ENCODE measurements at regions of chr1 and their contacts with region 1.

Region 1: GRCh38 chr1:151024540-151025146 is 11.7 kb upstream of the BNIPL start:
- DNase-seq: peak; percentile 58
- ATAC-seq: peak; percentile 97
- H3K4me3 ChIP-seq: no peak overlapping the region
- H3K27ac ChIP-seq: no peak overlapping the region
- H3K4me1 ChIP-seq: no peaks in the 10 kb centered on the region
- H3K27me3 ChIP-seq: no peaks in the 10 kb centered on the region
- CTCF ChIP-seq: peak; percentile 91
- EP300 ChIP-seq: no peak
- POLR2A ChIP-seq: no peak
- RAD21 ChIP-seq: peak; percentile 78

Region 2: GRCh38 chr1:151056149-151056548 is 31.5 kb after region 1 on chr1:
- CTCF ChIA-PET with region 1: no interaction called
- POLR2A ChIA-PET with region 1: no interaction called
- in situ Hi-C with region 1: no loop called
- intact Hi-C with region 1: no loop called
- DNase-seq: no peak
- ATAC-seq: no peak
- H3K4me3 ChIP-seq: no peak overlapping the region
- H3K27ac ChIP-seq: no peak overlapping the region
- H3K4me1 ChIP-seq: peaks cover 56% of the 10 kb centered on the region
- H3K27me3 ChIP-seq: 0 out of 5 replicates have a peak, but pooled peaks cover 0 to 3% of the 10 kb centered on the region in 2 experiments
- CTCF ChIP-seq: no peak
- EP300 ChIP-seq: no peak
- POLR2A ChIP-seq: no peak
- RAD21 ChIP-seq: no peak

Region 3: GRCh38 chr1:151146412-151147140 is 121.9 kb after region 1 on chr1 and contains the start of gene SEMA6C:
- CTCF ChIA-PET with region 1: no interaction called
- POLR2A ChIA-PET with region 1: no interaction called
- in situ Hi-C with region 1: no loop called
- intact Hi-C with region 1: loop called (anchors 1 kb)
- DNase-seq: peak; percentile 82
- ATAC-seq: peak; percentile 98
- H3K4me3 ChIP-seq: peak within 1 kb of the TSS; percentile 73 to 77 (median 77)
- H3K27ac ChIP-seq: peak within 1 kb of the TSS; percentile 55
- H3K4me1 ChIP-seq: peaks cover 33% of the 10 kb centered on the region
- H3K27me3 ChIP-seq: no peaks in the 10 kb centered on the region
- CTCF ChIP-seq: 0 out of 2 replicates have a peak, but pooled peaks have one; percentile 2
- EP300 ChIP-seq: no peak
- POLR2A ChIP-seq: peak; percentile 57 to 89; a peak in 3 of 4 replicates
- RAD21 ChIP-seq: no peak
- total RNA-seq, gene SEMA6C: 0.80 and 1.4 TPM in 2 replicates

Measured in HepG2 (cell line).